ENCODE measurements at regions of chr9 and their contacts with region 1.

Region 1: GRCh38 chr9:123326662-123327093 is 29.3 kb upstream of the CRB2 start:
- DNase-seq: no peak
- H3K4me3 ChIP-seq: no peak overlapping the region
- H3K27ac ChIP-seq: no peak overlapping the region
- H3K4me1 ChIP-seq: peaks cover 0 to 13% (median 6%) of the 10 kb centered on the region in 4 experiments; a peak in 6 of 7 replicates
- H3K27me3 ChIP-seq: peaks cover 0 to 5% (median 0%) of the 10 kb centered on the region in 4 experiments; a peak in 1 of 7 replicates
- CTCF ChIP-seq: no peak
- EP300 ChIP-seq: no peak
- POLR2A ChIP-seq: no peak
- RAD21 ChIP-seq: no peak

Region 2: GRCh38 chr9:123338710-123339665 is 12.3 kb after region 1 on chr9:
- CTCF ChIA-PET with region 1: interaction called, 15 read pairs
- POLR2A ChIA-PET with region 1: interaction called, 4 read pairs
- DNase-seq: no peak
- H3K4me3 ChIP-seq: no peak overlapping the region
- H3K27ac ChIP-seq: no peak overlapping the region
- H3K4me1 ChIP-seq: peaks cover 3 to 18% (median 7%) of the 10 kb centered on the region in 4 experiments
- H3K27me3 ChIP-seq: no peaks in the 10 kb centered on the region
- CTCF ChIP-seq: no peak
- EP300 ChIP-seq: no peak
- POLR2A ChIP-seq: no peak
- RAD21 ChIP-seq: no peak